Endothelial cell of umbilical vein (primary cell): ENCODE measurements at regions of chr15 and their contacts with region 1.

Region 1: GRCh38 chr15:100918034-100918689 is 995 bp upstream of the LRRK1 start:
- DNase-seq: peak; percentile 78
- H3K4me3 ChIP-seq: peak overlapping the region; percentile 50 to 60 (median 58)
- H3K27ac ChIP-seq: peak overlapping the region; percentile 44
- H3K4me1 ChIP-seq: peaks cover 14% of the 10 kb centered on the region
- H3K27me3 ChIP-seq: no peaks in the 10 kb centered on the region
- CTCF ChIP-seq: peak; percentile 90 to 94
- POLR2A ChIP-seq: no peak

Region 2: GRCh38 chr15:100671858-100672543 is 246.2 kb before region 1 on chr15:
- CTCF ChIA-PET with region 1: no interaction called
- POLR2A ChIA-PET with region 1: no interaction called
- dilution Hi-C with region 1: no loop called
- intact Hi-C with region 1: loop called (anchors 1 kb)
- DNase-seq: peak; percentile 42
- H3K4me3 ChIP-seq: no peak overlapping the region
- H3K27ac ChIP-seq: no peak overlapping the region
- H3K4me1 ChIP-seq: no peaks in the 10 kb centered on the region
- H3K27me3 ChIP-seq: no peaks in the 10 kb centered on the region
- CTCF ChIP-seq: peak; percentile 50 to 60
- POLR2A ChIP-seq: no peak

Region 3: GRCh38 chr15:100879464-100880138 is 38.6 kb before region 1 on chr15 and contains the start of gene ALDH1A3:
- CTCF ChIA-PET with region 1: interaction called, 34 read pairs
- POLR2A ChIA-PET with region 1: no interaction called
- dilution Hi-C with region 1: no loop called
- intact Hi-C with region 1: no loop called
- DNase-seq: no peak
- H3K4me3 ChIP-seq: peak within 1 kb of the TSS; percentile 33 to 45 (median 44)
- H3K27ac ChIP-seq: no peak within 1 kb of the TSS
- H3K4me1 ChIP-seq: peaks cover 3% of the 10 kb centered on the region
- H3K27me3 ChIP-seq: peaks cover 14 to 20% of the 10 kb centered on the region in 2 experiments
- CTCF ChIP-seq: no peak
- POLR2A ChIP-seq: no peak
- total RNA-seq, gene ALDH1A3: 5.8 TPM in 2 replicates

Region 4: GRCh38 chr15:100902436-100903167 is 15.6 kb before region 1 on chr15:
- CTCF ChIA-PET with region 1: interaction called, 53 read pairs
- POLR2A ChIA-PET with region 1: interaction called, 3 read pairs
- dilution Hi-C with region 1: no loop called
- intact Hi-C with region 1: loop called (anchors 1 kb)
- DNase-seq: peak; percentile 90
- H3K4me3 ChIP-seq: peak overlapping the region in 1 of 3 experiments; percentile 15
- H3K27ac ChIP-seq: peak overlapping the region; percentile 81
- H3K4me1 ChIP-seq: peaks cover 27% of the 10 kb centered on the region
- H3K27me3 ChIP-seq: no peaks in the 10 kb centered on the region
- CTCF ChIP-seq: no peak
- POLR2A ChIP-seq: no peak

Region 5: GRCh38 chr15:100944244-100944895 is 26.2 kb after region 1 on chr15:
- CTCF ChIA-PET with region 1: interaction called, 12 read pairs
- POLR2A ChIA-PET with region 1: no interaction called
- dilution Hi-C with region 1: no loop called
- intact Hi-C with region 1: no loop called
- DNase-seq: peak; percentile 43
- H3K4me3 ChIP-seq: no peak overlapping the region
- H3K27ac ChIP-seq: no peak overlapping the region
- H3K4me1 ChIP-seq: no peaks in the 10 kb centered on the region
- H3K27me3 ChIP-seq: no peaks in the 10 kb centered on the region
- CTCF ChIP-seq: no peak
- POLR2A ChIP-seq: no peak

Region 6: GRCh38 chr15:101000271-101000681 is 82.1 kb after region 1 on chr15:
- CTCF ChIA-PET with region 1: interaction called, 34 read pairs
- POLR2A ChIA-PET with region 1: no interaction called
- dilution Hi-C with region 1: no loop called
- intact Hi-C with region 1: no loop called
- DNase-seq: no peak
- H3K4me3 ChIP-seq: no peak overlapping the region
- H3K27ac ChIP-seq: no peak overlapping the region
- H3K4me1 ChIP-seq: no peaks in the 10 kb centered on the region
- H3K27me3 ChIP-seq: no peaks in the 10 kb centered on the region
- CTCF ChIP-seq: no peak
- POLR2A ChIP-seq: no peak